Activated T-helper 2 cell treated with anti-CD3 and anti-CD28 coated beads, Interferon-gamma antibody, Interleukin-2, Interleukin-4, amounts not matched to agents 10 μg/mL and 5 μg/mL and 100 μg/mL, durations not matched to agents 14 hours and 24 hours and 36 hours (primary cell): ENCODE measurements at regions of chr10 and their contacts with region 1.

Region 1: GRCh38 chr10:22340362-22341189 is 4.7 kb upstream of the SPAG6 start:
- DNase-seq: peak; percentile 69
- H3K4me3 Mint-ChIP-seq: peak overlapping the region; percentile 85
- H3K27ac Mint-ChIP-seq: peak overlapping the region; percentile 90
- H3K4me1 Mint-ChIP-seq: peaks cover 45% of the 10 kb centered on the region
- H3K27me3 Mint-ChIP-seq: peaks cover 70% of the 10 kb centered on the region

Region 2: DNA sequence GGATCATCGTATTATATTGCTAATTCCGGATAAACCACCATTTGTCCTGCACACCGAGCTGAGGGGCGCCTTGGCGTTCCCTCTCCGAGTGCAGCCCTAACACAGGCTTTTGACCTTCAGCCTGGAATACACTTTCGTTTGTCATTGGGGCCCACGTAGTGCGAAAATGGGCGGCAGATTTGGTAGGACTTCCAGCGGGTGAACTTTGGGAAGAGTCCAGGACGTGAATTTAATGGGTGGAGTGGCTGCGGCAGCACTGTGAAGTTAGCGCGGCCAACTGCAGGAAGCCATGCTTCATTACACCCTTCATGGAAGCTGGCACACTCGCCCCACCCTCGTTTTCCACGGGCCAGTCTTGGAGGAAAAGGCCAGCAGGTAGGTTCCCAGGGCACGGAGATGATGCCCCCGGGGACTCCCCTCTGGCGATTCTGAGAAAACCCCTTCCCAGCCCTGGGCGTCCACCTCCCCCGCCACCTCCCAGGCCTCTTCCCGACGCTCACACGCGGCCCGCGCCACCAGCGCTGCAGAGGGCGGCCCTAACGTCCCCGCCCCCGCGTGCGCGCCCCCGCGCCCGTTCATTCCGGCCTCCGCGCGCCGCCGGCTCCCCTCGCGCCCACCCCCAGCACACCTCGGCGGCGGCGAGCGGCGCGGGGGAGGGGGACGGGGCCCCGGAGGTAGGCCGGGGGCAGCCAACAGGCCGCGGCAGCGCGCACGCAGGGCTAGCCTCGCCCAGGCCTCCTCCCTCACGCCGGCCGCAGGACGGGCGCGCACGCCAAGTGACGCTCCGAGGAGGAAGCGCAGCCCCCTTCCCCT is 806.9 kb before region 1 on chr10 and contains the start of gene MLLT10:
- intact Hi-C with region 1: loop called (anchors 5 kb)
- DNase-seq: peak; percentile 88
- H3K4me3 Mint-ChIP-seq: peak within 1 kb of the TSS; percentile 85
- H3K27ac Mint-ChIP-seq: peak within 1 kb of the TSS; percentile 89
- H3K4me1 Mint-ChIP-seq: peaks cover 19% of the 10 kb centered on the region
- H3K27me3 Mint-ChIP-seq: peaks cover 20% of the 10 kb centered on the region
- total RNA-seq, gene MLLT10: 45.4 and 47.4 TPM in 2 replicates

Region 3: GRCh38 chr10:22245567-22245966 is 95.0 kb before region 1 on chr10:
- intact Hi-C with region 1: loop called (anchors 1 kb)
- DNase-seq: no peak
- H3K4me3 Mint-ChIP-seq: no peak overlapping the region
- H3K27ac Mint-ChIP-seq: peak overlapping the region; percentile 59
- H3K4me1 Mint-ChIP-seq: peaks cover 42% of the 10 kb centered on the region
- H3K27me3 Mint-ChIP-seq: peaks cover 3% of the 10 kb centered on the region

Region 4: GRCh38 chr10:22271786-22272185 is 68.8 kb before region 1 on chr10:
- intact Hi-C with region 1: no loop called
- DNase-seq: no peak
- H3K4me3 Mint-ChIP-seq: no peak overlapping the region
- H3K27ac Mint-ChIP-seq: no peak overlapping the region
- H3K4me1 Mint-ChIP-seq: no peaks in the 10 kb centered on the region
- H3K27me3 Mint-ChIP-seq: peaks cover 13% of the 10 kb centered on the region

Region 5: GRCh38 chr10:22325272-22326144 is 15.1 kb before region 1 on chr10:
- intact Hi-C with region 1: loop called (anchors 1 kb)
- DNase-seq: peak; percentile 65
- H3K4me3 Mint-ChIP-seq: peak overlapping the region; percentile 83
- H3K27ac Mint-ChIP-seq: peak overlapping the region; percentile 1
- H3K4me1 Mint-ChIP-seq: peaks cover 35% of the 10 kb centered on the region
- H3K27me3 Mint-ChIP-seq: peaks cover 26% of the 10 kb centered on the region

Region 6: DNA sequence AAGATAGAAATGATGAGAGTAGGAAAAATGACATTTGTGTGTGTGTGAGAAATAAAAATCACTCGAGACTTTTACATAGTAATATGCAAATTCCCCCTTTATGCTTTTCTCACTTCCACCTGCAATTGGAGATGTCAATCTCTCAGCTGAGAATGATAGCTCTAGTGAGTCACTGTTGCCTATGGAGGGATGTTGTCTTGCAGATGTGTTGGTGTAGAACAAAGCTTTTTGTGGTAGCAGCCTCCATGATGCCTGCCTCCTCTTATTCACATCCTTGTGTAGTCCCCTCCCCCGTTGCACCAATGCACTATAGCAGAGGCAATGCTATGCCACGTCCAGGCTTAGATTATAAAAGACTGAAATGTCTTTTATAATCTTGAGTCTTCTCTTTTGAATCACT is 38.5 kb after region 1 on chr10:
- intact Hi-C with region 1: loop called (anchors 2 kb)
- DNase-seq: no peak
- H3K4me3 Mint-ChIP-seq: no peak overlapping the region
- H3K27ac Mint-ChIP-seq: peak overlapping the region; percentile 69
- H3K4me1 Mint-ChIP-seq: peaks cover 20% of the 10 kb centered on the region
- H3K27me3 Mint-ChIP-seq: no peaks in the 10 kb centered on the region

Region 7: DNA sequence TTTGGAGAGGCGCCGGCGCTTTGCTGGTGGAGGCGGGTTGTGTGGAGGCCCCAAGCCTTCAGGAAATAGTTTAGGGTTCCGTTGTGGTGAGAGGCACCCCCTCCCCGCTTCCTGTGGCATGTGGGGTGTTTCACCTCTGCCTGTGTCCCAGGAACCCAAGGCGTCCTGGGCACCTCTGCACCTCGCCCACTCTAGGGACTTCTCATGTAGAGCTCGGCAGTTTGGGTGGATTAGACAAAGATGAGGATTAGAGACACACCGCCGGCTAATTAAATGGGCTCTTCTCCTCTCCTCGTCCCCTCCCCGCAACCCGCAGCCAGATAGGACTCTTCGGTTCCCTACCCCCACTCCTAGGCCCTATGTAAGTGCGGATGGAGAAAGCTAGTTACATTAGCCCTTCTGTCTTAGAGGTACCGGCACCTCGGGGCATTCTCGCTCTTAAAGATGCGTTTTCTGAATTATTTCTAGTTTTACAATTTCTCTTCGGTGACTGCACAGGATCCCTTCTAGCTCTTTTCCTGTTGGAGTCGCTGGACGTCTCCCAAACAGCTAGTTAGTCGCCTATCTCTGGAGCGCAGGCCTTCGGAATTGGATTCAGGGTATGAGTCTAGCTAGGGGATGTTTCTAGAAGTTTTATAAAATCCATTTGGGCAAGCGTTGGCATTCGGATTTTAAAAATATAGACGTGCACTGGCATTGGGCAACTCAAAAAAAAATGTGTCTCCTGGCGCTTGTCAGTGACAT is 859.4 kb after region 1 on chr10:
- intact Hi-C with region 1: loop called (anchors 2 kb)
- DNase-seq: no peak
- H3K4me3 Mint-ChIP-seq: no peak overlapping the region
- H3K27ac Mint-ChIP-seq: no peak overlapping the region
- H3K4me1 Mint-ChIP-seq: no peaks in the 10 kb centered on the region
- H3K27me3 Mint-ChIP-seq: peaks cover 83% of the 10 kb centered on the region